A549 (cell line): ENCODE measurements at regions of chr2 and their contacts with region 1.

Region 1: DNA sequence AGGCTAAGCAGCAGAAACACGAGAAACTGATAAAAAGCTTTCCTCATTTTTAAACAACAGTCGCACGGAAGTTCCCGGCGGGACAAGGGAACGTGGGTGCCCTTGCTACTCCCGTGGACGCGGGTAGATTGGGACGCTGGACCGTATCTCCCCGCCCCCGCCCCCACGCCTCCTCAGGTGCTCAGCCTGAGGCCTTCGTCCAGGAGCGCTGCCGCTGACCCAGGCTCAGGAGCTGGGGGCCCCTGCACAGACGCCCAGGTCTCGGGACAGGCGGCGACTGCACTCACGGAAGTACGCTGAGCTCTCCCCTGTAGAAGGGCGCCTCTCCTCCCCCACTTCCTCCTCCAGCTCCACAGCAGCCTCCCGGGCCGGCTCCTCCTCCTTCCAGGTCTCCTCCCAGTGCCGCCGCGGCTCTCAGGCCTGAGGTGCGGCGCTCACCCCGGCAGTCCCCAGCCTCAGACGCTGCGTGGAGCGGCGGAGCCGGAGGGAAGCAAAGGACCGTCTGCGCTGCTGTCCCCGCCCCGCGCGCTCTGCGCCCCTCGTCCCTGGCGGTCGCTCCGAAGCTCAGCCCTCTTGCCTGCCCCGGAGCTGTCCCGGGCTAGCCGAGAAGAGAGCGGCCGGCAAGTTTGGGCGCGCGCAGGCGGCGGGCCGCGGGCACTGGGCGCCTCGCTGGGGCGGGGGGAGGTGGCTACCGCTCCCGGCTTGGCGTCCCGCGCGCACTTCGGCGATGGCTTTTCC is at the start of gene ITGAV:
- DNase-seq: peak; percentile 84 to 95
- ATAC-seq: peak; percentile 95 to 98
- H3K4me3 ChIP-seq: peak within 1 kb of the TSS; percentile 95
- H3K27ac ChIP-seq: peak within 1 kb of the TSS; percentile 97
- H3K4me1 ChIP-seq: peaks cover 40% of the 10 kb centered on the region
- CTCF ChIP-seq: no peak; the same call in 2 of the 3 replicates
- EP300 ChIP-seq: no peak
- POLR2A ChIP-seq: peak; percentile 91
- RAD21 ChIP-seq: peak; percentile 19 to 33; a peak in 4 of 5 replicates
- polyA plus RNA-seq, gene ITGAV: 148 and 159 TPM in 2 replicates

Region 2: DNA sequence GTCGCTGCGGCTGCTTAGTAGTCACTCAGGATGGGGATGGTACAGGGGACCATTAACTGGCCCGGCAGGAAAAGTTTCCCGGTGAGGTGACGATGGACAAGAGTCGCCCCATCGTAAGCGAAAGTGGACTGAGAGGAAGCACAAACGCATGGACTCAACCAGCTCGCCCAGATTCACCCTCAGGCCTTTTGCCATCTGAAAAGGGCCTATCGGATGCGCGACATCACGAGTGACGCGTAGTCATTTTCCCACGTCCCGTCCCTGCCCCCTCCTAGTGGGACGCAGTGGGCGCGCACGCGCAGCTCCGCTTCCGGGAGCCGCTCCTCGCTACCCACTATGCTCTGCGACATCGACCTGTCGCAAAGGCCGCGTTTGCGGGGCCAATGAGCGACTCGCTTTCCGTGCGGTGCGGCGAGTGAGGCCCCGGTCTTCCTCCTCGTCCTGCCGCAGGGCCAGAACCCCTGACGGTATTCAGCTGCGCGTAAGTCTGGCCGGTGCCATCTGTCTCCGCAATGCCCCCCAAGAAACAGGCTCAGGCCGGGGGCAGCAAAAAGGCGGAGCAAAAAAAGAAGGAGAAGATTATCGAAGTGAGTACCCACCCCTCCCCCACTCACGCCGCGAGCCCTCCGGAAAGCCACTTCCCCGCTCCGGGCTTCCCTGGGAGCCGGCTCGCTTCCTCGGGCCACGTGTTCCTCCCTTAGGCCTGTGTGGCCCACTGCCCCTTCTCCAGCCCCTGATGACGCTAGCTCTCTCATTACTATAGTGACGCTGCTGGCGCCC is 103.7 kb before region 1 on chr2 and contains the start of gene ZC3H15:
- CTCF ChIA-PET with region 1: no interaction called
- POLR2A ChIA-PET with region 1: interaction called, 20 read pairs
- DNase-seq: peak; percentile 82 to 98
- ATAC-seq: peak; percentile 89 to 94
- H3K4me3 ChIP-seq: peak within 1 kb of the TSS; percentile 84
- H3K27ac ChIP-seq: peak within 1 kb of the TSS; percentile 77 to 92
- H3K4me1 ChIP-seq: peaks cover 26% of the 10 kb centered on the region
- CTCF ChIP-seq: no peak
- EP300 ChIP-seq: no peak
- POLR2A ChIP-seq: peak; percentile 67
- RAD21 ChIP-seq: no peak
- polyA plus RNA-seq, gene ZC3H15: 125 and 191 TPM in 2 replicates

Region 3: GRCh38 chr2:186503848-186504606 is 85.8 kb before region 1 on chr2:
- CTCF ChIA-PET with region 1: interaction called, 13 read pairs
- POLR2A ChIA-PET with region 1: interaction called, 5 read pairs
- DNase-seq: peak in 1 of 2 experiments; percentile 37
- ATAC-seq: peak; percentile 80 to 82
- H3K4me3 ChIP-seq: no peak overlapping the region
- H3K27ac ChIP-seq: no peak overlapping the region
- H3K4me1 ChIP-seq: 0 out of 3 replicates have a peak, but pooled peaks cover 4% of the 10 kb centered on the region
- CTCF ChIP-seq: peak; percentile 81
- EP300 ChIP-seq: no peak
- POLR2A ChIP-seq: no peak
- RAD21 ChIP-seq: peak; percentile 83 to 88

Region 4: GRCh38 chr2:186544255-186544675 is 45.5 kb before region 1 on chr2:
- CTCF ChIA-PET with region 1: interaction called, 5 read pairs
- POLR2A ChIA-PET with region 1: interaction called, 21 read pairs
- DNase-seq: peak; percentile 51 to 85
- ATAC-seq: peak; percentile 92 to 93
- H3K4me3 ChIP-seq: peak overlapping the region; percentile 6; the same call in 1 of the 3 replicates
- H3K27ac ChIP-seq: peak overlapping the region; percentile 90 to 91
- H3K4me1 ChIP-seq: peaks cover 67% of the 10 kb centered on the region
- CTCF ChIP-seq: no peak
- EP300 ChIP-seq: peak; percentile 38 to 48; a peak in 2 of 5 replicates
- POLR2A ChIP-seq: no peak
- RAD21 ChIP-seq: peak in 1 of 2 experiments; percentile 19; a peak in 2 of 5 replicates

Region 5: DNA sequence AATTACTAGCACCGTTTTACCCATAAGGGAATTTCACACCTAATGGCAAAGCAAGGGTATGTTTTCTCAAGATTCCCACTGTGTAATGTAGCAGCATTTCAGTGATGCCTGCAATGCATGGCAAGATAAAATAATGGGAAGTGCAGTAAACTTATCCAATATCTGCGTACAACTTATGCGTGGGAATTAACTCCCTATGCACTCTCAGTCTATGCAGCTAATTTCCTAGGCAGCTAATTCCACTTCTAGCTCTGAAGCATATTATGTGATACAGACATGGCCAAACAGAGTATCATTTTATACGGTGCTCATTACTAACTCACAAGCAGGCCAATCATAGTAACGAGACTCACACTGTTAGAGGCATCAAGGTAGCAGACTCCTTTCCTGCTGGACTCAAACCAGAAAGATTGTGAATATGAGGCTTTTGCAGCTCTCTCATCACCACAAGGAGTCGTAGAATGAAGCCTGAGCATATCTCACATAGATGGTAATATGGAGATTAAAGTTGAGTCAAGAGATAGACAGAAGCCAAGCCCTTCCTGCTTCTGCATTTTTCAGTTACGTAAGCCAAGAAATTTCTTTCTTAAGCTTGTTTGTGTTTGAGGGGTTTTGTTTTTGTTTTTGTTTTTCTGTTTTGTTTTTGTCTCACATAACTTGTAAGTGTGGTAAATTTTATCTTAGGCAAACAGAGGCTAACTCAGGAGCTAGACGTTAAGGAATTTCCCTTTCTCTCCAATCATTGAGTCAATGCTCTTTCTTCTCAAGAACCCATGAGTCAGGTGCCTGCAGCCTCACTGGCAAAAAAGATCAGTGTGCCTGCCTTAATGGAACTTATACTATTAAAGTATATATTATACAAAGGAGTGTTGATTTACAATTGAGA is 34.7 kb before region 1 on chr2:
- CTCF ChIA-PET with region 1: interaction called, 4 read pairs
- POLR2A ChIA-PET with region 1: interaction called, 21 read pairs
- DNase-seq: peak in 1 of 2 experiments; percentile 55
- ATAC-seq: peak; percentile 93
- H3K4me3 ChIP-seq: no peak overlapping the region
- H3K27ac ChIP-seq: peak overlapping the region in 1 of 2 experiments; percentile 52; a peak in 3 of 6 replicates
- H3K4me1 ChIP-seq: peaks cover 24% of the 10 kb centered on the region
- CTCF ChIP-seq: no peak; the same call in 2 of the 3 replicates
- EP300 ChIP-seq: no peak
- POLR2A ChIP-seq: no peak
- RAD21 ChIP-seq: peak in 1 of 2 experiments; percentile 36; a peak in 2 of 5 replicates

Region 6: GRCh38 chr2:186575302-186575701 is 14.5 kb before region 1 on chr2:
- CTCF ChIA-PET with region 1: interaction called, 14 read pairs
- POLR2A ChIA-PET with region 1: interaction called, 41 read pairs
- DNase-seq: peak; percentile 76 to 97
- ATAC-seq: peak; percentile 90 to 95
- H3K4me3 ChIP-seq: no peak overlapping the region
- H3K27ac ChIP-seq: peak overlapping the region; percentile 86 to 87; a peak in 5 of 6 replicates
- H3K4me1 ChIP-seq: peaks cover 72% of the 10 kb centered on the region
- CTCF ChIP-seq: no peak
- EP300 ChIP-seq: peak; percentile 36 to 51; a peak in 2 of 5 replicates
- POLR2A ChIP-seq: no peak
- RAD21 ChIP-seq: peak in 1 of 2 experiments; percentile 26; a peak in 2 of 5 replicates

Region 7: DNA sequence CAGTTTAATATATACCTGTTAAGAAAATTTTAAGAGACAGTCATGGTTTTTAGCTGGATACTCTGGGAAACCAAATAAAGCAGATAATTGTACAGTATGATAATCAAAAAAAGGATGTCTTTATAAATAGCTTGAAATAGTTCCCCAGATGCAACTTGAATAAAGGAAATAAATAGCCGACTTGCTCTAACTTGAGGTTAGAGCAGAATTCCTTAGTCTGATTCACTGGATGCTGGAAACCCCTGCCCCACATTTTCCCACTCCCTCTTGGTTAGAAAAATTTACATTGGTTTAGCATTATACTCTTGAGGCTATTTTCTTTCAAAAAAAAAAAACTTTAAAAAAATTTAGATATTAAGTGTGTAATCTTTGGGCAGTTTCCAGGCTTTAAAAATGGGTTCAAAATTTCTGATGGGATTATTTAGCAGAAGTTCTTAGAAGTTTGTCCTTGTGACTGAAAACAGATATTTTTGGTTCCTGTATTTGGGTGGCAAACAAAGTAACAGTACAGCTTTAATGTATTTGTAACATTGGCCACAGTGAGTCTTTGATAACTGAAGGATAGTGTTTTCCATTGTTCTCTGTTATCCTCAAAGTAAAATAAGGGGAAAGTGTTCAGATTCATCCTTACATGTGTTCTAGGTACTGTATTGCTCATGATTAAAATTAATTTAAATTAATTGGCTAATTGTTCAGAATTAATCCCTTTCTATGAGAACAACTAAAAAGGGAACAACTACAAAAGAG is 39.6 kb after region 1 on chr2:
- CTCF ChIA-PET with region 1: no interaction called
- POLR2A ChIA-PET with region 1: no interaction called
- DNase-seq: no peak
- ATAC-seq: no peak
- H3K4me3 ChIP-seq: no peak overlapping the region
- H3K27ac ChIP-seq: no peak overlapping the region
- H3K4me1 ChIP-seq: no peaks in the 10 kb centered on the region
- CTCF ChIP-seq: no peak
- EP300 ChIP-seq: no peak
- POLR2A ChIP-seq: no peak
- RAD21 ChIP-seq: no peak

Region 8: GRCh38 chr2:186641807-186642321 is 52.1 kb after region 1 on chr2:
- CTCF ChIA-PET with region 1: interaction called, 12 read pairs
- POLR2A ChIA-PET with region 1: interaction called, 8 read pairs
- DNase-seq: peak; percentile 44 to 79
- ATAC-seq: peak; percentile 92 to 93
- H3K4me3 ChIP-seq: no peak overlapping the region
- H3K27ac ChIP-seq: peak overlapping the region in 1 of 2 experiments; percentile 55; a peak in 1 of 6 replicates
- H3K4me1 ChIP-seq: peaks cover 11% of the 10 kb centered on the region; the same call in 1 of the 3 replicates
- CTCF ChIP-seq: peak; percentile 93
- EP300 ChIP-seq: no peak
- POLR2A ChIP-seq: no peak
- RAD21 ChIP-seq: peak; percentile 95 to 96